Mammary epithelial cell (primary cell): ENCODE measurements at regions of chr15 and their contacts with region 1.

Region 1: DNA sequence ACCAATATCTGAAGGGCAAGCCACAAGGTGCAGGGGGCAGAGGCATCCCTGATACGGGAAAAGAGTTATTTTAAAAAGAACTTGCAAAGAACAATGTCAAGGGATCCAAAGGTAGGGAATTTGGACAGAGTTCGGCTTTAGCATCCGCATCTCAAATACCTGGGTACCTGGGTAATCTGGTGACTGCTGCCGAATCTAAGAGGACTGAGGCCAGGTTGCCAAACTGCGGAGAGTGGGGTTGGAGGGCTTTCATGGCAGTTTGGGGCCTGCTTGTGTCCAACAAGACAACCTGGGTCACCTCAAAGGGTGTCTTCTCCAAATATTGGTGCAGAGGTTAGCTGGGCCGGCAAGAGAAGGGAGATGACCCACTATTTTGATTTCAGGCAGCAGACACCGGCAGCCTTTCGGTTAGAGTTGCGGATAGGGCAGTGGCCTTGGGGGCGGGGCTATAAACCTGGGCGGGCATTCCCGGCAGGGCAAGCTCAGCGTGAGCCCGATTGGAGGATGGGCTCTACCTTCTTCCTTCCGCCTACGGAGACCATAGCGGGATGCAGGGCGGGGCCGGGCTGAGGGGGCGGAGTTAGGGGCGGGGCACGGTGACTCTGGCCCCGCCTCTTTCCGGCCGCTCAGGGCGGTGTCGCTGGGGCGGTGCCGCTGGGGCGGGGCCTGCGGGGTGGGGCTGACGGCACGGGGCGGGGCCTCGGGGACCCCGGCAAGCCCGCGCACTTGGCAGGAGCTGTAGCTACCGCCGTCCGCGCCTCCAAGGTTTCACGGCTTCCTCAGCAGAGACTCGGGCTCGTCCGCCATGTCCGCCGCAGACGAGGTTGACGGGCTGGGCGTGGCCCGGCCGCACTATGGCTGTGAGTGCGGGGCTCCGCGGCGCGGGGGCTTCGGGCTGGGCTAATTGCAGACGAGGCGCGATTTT is at the start of gene IQGAP1:
- DNase-seq: peak; percentile 94
- H3K4me3 ChIP-seq: peak within 1 kb of the TSS; percentile 56 to 100 (median 99)
- H3K27ac ChIP-seq: peak within 1 kb of the TSS; percentile 89
- H3K4me1 ChIP-seq: peaks cover 16% of the 10 kb centered on the region
- H3K27me3 ChIP-seq: no peaks in the 10 kb centered on the region
- CTCF ChIP-seq: no peak
- total RNA-seq, gene IQGAP1: 247 to 272 TPM

Region 2: GRCh38 chr15:89794627-89795241 is 593.1 kb before region 1 on chr15:
- CTCF ChIA-PET with region 1: no interaction called
- dilution Hi-C with region 1: no loop called
- in situ Hi-C with region 1: no loop called
- intact Hi-C with region 1: no loop called
- DNase-seq: no peak
- H3K4me3 ChIP-seq: no peak overlapping the region
- H3K27ac ChIP-seq: no peak overlapping the region
- H3K4me1 ChIP-seq: peaks cover 2% of the 10 kb centered on the region
- H3K27me3 ChIP-seq: no peaks in the 10 kb centered on the region
- CTCF ChIP-seq: no peak

Region 3: DNA sequence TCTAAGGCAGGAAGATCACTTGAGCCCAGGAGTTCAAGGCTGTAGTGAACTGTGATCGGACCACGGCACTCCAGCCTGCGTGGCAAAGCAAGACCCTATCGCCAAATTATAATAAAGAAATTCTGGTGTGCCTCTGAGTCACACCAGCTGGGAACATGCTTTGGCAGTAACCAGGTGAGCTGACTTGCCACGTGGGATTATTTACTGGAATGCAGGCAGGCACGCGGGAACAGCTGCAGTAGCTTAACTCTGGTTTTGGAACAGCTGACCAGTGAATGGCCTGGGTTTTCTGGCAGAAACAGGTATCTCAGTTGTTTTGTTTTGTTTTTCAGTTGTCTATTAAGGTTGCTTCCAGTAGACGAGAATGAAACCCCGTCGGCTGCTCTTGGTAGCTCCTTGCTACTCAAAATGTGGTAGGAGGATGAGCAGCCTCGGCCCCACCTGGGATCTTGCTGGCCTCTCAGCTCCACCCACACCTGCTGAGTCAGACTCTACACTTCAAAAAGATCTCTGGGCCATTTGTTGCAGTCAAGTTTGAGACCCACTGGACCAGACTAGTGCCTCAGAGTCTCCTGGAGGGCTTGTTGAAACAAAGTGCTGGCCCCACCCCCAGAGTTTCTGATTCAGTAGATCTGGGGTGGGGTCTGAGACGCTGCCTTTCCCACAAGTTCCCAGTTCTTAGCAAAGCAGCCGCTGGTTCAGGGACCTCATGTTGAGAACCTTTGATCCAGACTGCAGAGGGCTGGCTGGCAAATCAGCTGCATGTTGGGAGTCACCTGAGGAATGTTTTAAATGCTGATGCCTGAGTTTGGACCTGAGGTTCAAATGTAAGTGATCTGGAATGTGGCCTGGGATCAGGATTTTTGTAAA is 312.1 kb before region 1 on chr15:
- CTCF ChIA-PET with region 1: no interaction called
- dilution Hi-C with region 1: no loop called
- in situ Hi-C with region 1: no loop called
- intact Hi-C with region 1: no loop called
- DNase-seq: peak; percentile 86
- H3K4me3 ChIP-seq: no peak overlapping the region
- H3K27ac ChIP-seq: peak overlapping the region; percentile 19
- H3K4me1 ChIP-seq: peaks cover 18% of the 10 kb centered on the region
- H3K27me3 ChIP-seq: no peaks in the 10 kb centered on the region
- CTCF ChIP-seq: no peak

Region 4: GRCh38 chr15:90143166-90143655 is 244.6 kb before region 1 on chr15:
- CTCF ChIA-PET with region 1: no interaction called
- dilution Hi-C with region 1: no loop called
- in situ Hi-C with region 1: no loop called
- intact Hi-C with region 1: loop called (anchors 2 kb)
- DNase-seq: peak; percentile 48
- H3K4me3 ChIP-seq: no peak overlapping the region
- H3K27ac ChIP-seq: no peak overlapping the region
- H3K4me1 ChIP-seq: peaks cover 10% of the 10 kb centered on the region
- H3K27me3 ChIP-seq: no peaks in the 10 kb centered on the region
- CTCF ChIP-seq: peak; percentile 56 to 78

Region 5: DNA sequence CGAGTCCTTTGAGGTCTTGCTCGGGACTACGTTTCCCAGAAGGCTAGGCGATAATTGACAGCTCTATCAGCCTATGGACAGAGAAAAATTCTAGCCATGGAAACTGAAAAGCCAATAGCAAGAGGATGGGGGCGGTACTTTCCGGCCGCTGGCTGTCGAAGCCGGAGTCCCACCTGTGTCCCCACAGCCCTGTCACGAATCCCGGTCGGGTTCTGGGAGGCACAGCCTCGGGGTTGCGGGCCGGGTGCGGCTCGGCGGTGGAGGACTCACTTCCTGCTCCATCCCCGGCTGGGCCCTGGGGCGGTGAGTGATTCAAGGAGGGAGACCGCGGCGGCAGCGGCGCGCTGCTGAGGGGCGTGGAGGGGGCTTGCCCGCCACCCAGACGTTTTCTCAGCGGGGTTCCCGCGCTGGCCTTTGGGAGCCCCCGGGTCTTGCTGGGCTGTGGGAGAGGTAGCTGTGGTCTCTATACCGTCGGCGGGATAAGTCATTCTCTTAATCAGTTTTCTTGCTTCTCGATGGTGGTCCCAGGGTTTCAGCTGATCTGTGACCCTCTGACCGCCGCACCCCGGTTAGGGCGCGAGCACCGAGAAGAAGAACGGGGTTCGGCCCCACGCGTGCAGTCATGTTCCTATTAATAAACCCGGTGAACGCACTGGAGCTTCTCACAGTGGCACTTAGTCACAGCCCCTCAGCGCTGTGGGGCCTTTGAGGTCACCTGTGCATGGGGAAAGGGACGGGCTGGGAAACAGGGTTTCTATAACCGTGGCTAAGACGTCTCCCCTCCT is 35.5 kb before region 1 on chr15 and contains the start of gene ZNF774:
- CTCF ChIA-PET with region 1: no interaction called
- dilution Hi-C with region 1: no loop called
- in situ Hi-C with region 1: no loop called
- intact Hi-C with region 1: loop called (anchors 5 kb)
- DNase-seq: peak; percentile 95
- H3K4me3 ChIP-seq: peak within 1 kb of the TSS; percentile 66 to 78 (median 66)
- H3K27ac ChIP-seq: peak within 1 kb of the TSS; percentile 74
- H3K4me1 ChIP-seq: peaks cover 23% of the 10 kb centered on the region
- H3K27me3 ChIP-seq: no peaks in the 10 kb centered on the region
- CTCF ChIP-seq: no peak
- total RNA-seq, gene ZNF774: 5.7 to 6.0 TPM

Region 6: GRCh38 chr15:90376789-90377188 is 11.0 kb before region 1 on chr15:
- CTCF ChIA-PET with region 1: no interaction called
- dilution Hi-C with region 1: no loop called
- in situ Hi-C with region 1: no loop called
- intact Hi-C with region 1: no loop called
- DNase-seq: no peak
- H3K4me3 ChIP-seq: no peak overlapping the region
- H3K27ac ChIP-seq: no peak overlapping the region
- H3K4me1 ChIP-seq: no peaks in the 10 kb centered on the region
- H3K27me3 ChIP-seq: no peaks in the 10 kb centered on the region
- CTCF ChIP-seq: no peak

Region 7: DNA sequence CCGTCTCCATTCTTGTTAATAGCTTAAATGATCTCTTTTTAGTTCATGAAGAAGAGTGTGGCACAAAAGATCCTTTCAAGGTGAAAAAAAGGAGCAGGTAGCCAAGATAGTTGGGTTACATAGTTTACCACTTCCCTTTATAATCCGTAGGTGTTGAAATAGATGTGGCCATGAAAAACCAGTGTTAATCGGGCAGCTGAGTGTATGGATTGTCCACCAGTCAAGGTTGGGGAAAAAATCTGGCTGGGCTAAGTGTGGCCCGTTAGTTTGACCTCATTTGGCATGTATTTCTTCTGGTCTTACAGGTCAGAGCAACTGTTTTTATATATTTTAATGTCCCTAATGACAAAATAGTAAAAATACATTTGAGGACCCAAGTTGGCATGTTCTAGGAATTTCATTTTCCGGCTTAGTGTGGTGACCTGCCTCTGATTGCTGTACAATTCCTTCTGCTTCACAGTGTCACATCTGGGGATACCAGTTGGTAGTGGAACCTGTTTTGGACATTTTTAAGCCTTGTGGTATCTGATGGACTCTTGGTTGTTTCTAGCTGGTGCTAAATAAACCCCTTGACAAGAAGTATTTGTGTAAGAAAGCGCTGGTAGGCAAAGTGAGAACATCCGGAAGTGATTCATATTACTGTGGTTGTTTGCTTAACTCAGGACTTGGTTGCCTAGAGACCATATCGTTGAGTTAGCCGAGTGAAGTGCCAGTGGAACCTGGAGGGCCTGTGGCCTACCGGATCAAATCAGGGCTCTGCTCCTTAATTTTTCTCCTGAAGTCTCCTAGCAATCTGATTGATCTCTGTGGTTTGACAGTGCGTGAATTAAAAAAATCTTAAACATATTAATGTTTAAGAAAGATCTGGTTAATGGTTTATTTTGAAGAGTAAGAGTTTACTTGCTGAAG is 12.9 kb after region 1 on chr15:
- CTCF ChIA-PET with region 1: no interaction called
- dilution Hi-C with region 1: no loop called
- in situ Hi-C with region 1: no loop called
- intact Hi-C with region 1: loop called (anchors 1 kb)
- DNase-seq: peak; percentile 91
- H3K4me3 ChIP-seq: peak overlapping the region; percentile 8 to 31 (median 12)
- H3K27ac ChIP-seq: peak overlapping the region; percentile 95
- H3K4me1 ChIP-seq: peaks cover 44% of the 10 kb centered on the region
- H3K27me3 ChIP-seq: no peaks in the 10 kb centered on the region
- CTCF ChIP-seq: no peak

Region 8: DNA sequence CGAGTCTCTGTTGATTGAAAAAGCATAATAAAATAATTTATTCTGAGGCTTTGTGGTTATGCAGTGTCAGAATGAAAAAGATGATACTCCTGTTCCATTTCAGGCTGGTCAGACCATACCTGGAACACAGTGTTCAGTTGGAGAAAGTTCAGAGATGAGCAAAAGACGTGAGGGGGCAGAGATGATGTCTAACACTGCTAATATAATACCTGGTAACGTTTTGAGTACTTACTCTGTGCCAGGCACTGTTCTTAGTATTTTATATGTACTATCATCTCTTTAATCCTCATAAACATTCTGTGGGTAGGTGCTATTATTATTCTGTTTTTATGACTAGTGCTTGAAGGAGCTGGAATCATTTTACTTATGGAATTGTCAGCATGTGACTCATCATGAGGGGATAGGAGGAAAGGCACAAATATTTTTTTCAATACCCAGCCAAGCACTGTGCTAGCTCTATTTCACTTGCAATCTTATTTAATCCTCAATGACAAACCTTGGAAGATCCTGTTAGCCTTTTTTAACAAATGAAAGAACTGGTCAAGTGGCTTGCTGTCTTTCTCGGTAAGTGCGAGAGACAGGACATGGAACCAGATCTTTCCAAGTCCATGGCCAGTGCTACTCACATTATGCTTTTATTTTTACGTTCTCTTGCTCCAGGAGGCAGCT is 32.1 kb after region 1 on chr15:
- CTCF ChIA-PET with region 1: no interaction called
- dilution Hi-C with region 1: no loop called
- in situ Hi-C with region 1: no loop called
- intact Hi-C with region 1: loop called (anchors 1 kb)
- DNase-seq: peak; percentile 78
- H3K4me3 ChIP-seq: peak overlapping the region in 2 of 3 experiments; percentile 1 to 13
- H3K27ac ChIP-seq: peak overlapping the region; percentile 67
- H3K4me1 ChIP-seq: peaks cover 43% of the 10 kb centered on the region
- H3K27me3 ChIP-seq: no peaks in the 10 kb centered on the region
- CTCF ChIP-seq: no peak